ENCODE measurements at regions of chr6 and their contacts with region 1.

Region 1: GRCh38 chr6:10954590-10955010 is 67.7 kb downstream of the SYCP2L start:
- DNase-seq: peak; percentile 67

Region 2: DNA sequence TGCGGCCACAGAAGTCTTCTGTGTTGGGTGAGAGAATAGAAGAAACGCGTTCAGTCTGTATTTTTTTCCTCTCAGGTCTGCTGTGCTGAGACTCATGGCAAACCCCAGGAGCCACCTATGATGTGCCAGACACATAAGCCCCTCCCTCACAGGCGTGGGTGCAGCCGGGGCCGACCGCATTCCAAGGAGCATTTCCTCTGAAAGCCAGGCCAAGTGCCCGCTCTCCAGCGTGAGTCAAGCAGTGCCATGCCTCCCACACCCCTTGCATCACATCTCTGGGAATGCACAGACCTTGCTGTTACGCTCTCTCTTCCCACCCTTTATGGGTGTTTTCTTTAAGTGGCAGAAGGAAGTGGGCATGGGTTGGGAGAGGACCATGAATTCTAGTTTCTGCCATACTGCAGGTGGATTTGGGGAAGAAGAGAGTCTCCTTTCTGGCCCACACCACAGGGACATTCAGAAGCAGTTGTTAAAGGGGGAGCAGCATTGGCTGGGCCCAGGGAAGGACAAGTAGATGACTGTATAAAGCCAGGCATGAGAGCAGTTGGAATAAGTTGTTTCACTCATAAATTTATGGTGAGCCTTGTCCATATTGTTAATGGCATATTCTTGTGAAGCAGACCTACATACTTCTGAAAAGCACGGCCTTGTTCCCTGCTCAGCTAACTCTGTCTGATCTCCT is 502.6 kb before region 1 on chr6:
- in situ Hi-C with region 1: no loop called
- DNase-seq: peak; percentile 96

Region 3: GRCh38 chr6:11043961-11044711 is 89.5 kb after region 1 on chr6 and contains the start of gene ELOVL2:
- in situ Hi-C with region 1: loop called (anchors 10 kb)
- DNase-seq: peak; percentile 62